GM10248 (cell line): ENCODE measurements at regions of chr15 and their contacts with region 1.

Region 1: GRCh38 chr15:64681424-64682024 is 93.9 kb downstream of the RBPMS2 start:
- DNase-seq: peak; percentile 58
- CTCF ChIP-seq: peak; percentile 54

Region 2: GRCh38 chr15:64667736-64668161 is 13.8 kb before region 1 on chr15:
- CTCF ChIA-PET with region 1: interaction called, 13 read pairs
- POLR2A ChIA-PET with region 1: no interaction called
- DNase-seq: no peak
- CTCF ChIP-seq: no peak

Region 3: GRCh38 chr15:64693134-64693533 is 11.6 kb after region 1 on chr15:
- CTCF ChIA-PET with region 1: interaction called, 62 read pairs
- POLR2A ChIA-PET with region 1: no interaction called
- DNase-seq: no peak
- CTCF ChIP-seq: no peak

Region 4: DNA sequence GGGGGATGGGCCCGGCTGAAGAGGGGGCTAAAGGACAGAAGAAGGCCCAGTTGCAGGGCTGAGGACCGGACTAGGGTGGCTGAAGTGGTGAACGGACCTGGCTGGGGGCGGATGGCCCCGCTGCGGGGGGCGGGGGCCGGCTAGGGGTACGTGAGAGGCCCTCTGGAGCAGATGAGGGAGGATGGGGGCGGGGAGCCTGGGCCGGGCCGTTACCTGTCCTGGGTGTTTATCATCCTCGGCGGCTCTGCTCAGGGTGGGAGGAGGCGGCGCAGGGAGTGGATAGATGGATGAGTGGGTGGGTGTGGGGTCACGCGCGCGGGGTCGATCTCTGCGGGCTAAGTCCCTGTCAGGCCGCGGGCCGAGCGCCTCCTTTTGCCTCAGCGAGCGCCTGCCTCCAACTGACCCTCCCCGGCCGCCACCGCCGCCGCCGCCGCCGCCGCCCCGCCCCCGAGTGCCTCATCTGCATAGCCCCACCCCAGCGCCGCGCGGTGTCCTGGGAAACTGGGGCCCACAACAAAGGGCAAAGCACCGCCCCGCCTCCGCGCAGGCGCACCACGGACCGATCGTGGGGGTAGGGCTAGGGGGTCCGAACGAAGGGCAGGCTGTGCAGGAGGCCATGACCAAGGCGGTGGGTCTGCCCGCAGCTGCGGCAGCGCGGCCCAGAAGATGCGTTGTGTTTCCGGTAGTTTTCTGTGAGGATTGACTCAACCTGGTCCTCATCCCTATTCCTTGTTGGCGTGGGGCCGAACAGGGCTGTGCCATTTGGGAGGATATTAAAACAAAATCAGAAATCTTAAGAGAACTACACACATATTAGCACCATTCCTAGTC is 21.5 kb after region 1 on chr15:
- CTCF ChIA-PET with region 1: interaction called, 62 read pairs
- POLR2A ChIA-PET with region 1: no interaction called
- DNase-seq: peak; percentile 99
- CTCF ChIP-seq: no peak

Region 5: DNA sequence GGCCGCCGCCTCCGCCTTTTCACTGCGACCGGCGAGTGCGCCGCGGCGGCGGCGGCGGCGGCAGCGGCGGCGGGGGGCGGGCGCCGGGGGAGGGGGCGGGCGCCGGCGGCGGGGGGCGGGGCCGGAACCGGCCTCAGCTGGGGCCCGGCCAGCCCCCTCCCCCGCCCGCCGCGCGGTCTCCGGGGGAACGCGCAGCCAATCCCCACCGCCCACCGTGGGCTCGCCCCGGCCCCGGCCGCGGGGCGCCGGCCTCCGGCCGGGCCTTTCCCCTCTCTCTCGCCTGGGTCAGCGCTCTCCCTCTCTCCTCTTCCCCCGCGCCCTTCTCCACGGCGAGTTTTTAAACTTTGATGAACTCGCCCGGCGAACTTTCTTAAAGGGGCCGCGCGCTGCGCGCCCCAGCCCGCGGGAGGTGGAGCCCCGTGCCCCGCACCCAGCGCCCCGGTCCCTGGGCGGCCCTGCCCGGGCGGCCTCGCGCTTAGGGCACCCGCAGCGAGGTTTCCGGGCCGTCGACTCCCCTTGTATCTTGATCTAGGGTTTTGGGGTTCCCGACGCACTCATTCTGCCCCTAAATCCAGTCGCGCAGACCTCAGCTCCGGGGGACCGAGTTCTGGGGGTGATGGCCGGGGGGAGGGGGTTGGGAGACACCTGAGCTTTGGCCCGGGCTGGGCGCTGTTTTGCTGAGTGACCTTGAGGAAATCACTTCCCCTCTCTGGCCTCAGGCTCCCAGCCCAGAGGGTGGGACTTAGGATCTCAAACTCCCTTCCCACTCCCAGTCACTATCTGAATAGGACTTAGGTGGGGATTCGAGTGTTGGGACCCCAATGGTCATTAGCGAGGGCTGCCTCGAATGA is 94.3 kb after region 1 on chr15 and contains the start of gene RBPMS2:
- CTCF ChIA-PET with region 1: no interaction called
- POLR2A ChIA-PET with region 1: no interaction called
- DNase-seq: peak; percentile 68
- CTCF ChIP-seq: no peak